ENCODE measurements at regions of chr1 and their contacts with region 1.

Region 1: GRCh38 chr1:156054500-156055280 is at the start of gene LAMTOR2:
- DNase-seq: peak; percentile 98
- H3K4me3 Mint-ChIP-seq: peak within 1 kb of the TSS; percentile 92
- H3K27ac Mint-ChIP-seq: peak within 1 kb of the TSS; percentile 93
- H3K4me1 Mint-ChIP-seq: peaks cover 24% of the 10 kb centered on the region
- H3K27me3 Mint-ChIP-seq: no peaks in the 10 kb centered on the region
- total RNA-seq, gene LAMTOR2: 54.9 to 55.9 TPM

Region 2: GRCh38 chr1:155308493-155309422 is 745.9 kb before region 1 on chr1 and contains the start of gene FDPS:
- CTCF ChIA-PET with region 1: no interaction called
- intact Hi-C with region 1: loop called (anchors 2 kb)
- DNase-seq: peak; percentile 99
- H3K4me3 Mint-ChIP-seq: peak within 1 kb of the TSS; percentile 96
- H3K27ac Mint-ChIP-seq: peak within 1 kb of the TSS; percentile 99
- H3K4me1 Mint-ChIP-seq: peaks cover 35% of the 10 kb centered on the region
- H3K27me3 Mint-ChIP-seq: no peaks in the 10 kb centered on the region
- total RNA-seq, gene FDPS: 332 to 333 TPM

Region 3: DNA sequence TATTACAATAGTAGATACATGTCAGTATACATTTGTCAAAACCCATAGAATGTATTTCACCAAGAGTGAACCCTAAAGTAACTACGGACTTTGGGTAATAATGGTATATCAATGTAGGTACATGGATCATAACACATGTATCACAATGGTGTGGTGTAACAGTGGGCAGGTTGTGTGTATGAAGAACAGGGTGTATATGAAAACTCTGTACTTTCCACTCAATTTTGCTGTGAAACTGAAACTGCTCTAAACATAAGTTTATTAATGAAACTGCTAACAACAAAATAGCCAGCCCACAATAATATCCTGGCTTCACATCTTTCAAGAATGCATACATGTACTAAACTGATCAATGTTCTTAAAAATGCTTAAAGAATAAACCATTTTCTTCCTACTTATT is 643.8 kb before region 1 on chr1:
- CTCF ChIA-PET with region 1: no interaction called
- intact Hi-C with region 1: no loop called
- DNase-seq: no peak
- H3K4me3 Mint-ChIP-seq: no peak overlapping the region
- H3K27ac Mint-ChIP-seq: no peak overlapping the region
- H3K4me1 Mint-ChIP-seq: peaks cover 1% of the 10 kb centered on the region
- H3K27me3 Mint-ChIP-seq: no peaks in the 10 kb centered on the region

Region 4: DNA sequence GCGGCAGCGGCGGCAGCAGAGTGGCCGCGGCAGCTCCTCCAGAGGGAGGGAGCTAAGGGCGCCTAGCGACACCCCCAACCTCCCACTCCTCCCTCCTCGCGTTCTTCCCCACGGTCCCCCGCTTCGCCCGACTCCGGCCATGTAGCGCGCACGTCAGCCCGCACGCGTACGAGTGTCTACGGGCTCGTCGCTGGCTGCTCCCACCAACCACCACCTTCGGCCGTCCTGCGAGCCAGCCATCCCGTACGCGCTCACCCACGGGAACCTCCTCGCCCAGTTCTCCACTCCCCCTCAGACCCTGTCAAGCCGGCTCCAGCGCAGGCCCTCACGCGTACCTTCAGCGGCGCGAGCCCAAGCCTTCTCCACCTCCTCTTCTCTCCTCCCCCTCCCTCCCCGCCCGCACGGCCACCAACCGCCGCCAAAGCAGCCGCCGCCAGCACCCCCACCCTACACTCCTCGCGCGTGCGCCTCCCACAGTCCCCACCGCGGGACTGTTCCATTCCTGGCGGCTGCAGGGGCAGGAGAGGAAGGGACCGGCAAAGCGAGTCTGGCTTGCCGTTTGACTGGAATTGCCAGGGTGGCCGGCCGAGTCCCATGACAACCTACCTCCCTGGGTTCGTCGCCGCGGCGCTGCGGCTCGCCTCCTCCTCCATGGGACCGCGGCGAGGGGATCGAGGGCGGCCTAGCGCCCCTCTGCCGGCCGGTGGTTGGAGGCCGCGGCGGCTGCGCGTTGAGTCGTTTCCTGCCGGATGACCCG is 366.2 kb before region 1 on chr1 and contains the start of gene YY1AP1:
- CTCF ChIA-PET with region 1: no interaction called
- intact Hi-C with region 1: loop called (anchors 1 kb)
- DNase-seq: peak; percentile 93
- H3K4me3 Mint-ChIP-seq: peak within 1 kb of the TSS; percentile 97
- H3K27ac Mint-ChIP-seq: peak within 1 kb of the TSS; percentile 95
- H3K4me1 Mint-ChIP-seq: peaks cover 70% of the 10 kb centered on the region
- H3K27me3 Mint-ChIP-seq: no peaks in the 10 kb centered on the region
- total RNA-seq, gene YY1AP1: 54.8 to 59.5 TPM

Region 5: DNA sequence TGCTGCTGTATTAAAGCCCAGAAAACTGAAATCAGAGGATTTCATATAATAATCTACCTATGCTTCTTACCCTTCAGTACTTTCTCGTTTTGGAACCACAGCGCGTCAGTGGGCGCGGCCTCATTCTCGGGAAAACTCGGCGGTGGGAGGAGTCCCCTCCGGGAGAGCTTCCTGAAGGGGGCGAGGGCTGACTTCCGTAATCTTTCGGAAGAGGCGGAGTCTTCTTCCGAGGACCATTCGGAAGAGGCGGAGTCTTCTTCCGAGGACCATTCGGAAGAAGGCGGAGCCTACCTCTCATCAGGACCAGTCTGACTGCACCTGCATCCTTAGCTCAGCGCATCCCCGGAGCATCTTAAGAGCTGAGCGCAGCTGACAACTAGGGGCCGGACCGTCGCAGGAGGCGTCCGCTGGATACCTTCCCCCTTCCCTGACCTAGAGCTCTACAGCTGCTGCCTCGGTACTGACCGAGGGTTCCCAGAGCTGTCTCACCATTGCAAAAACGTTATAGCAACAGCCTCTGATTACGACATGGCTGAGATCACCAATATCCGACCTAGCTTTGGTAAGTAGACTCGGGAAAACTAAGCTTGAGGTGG is 195.4 kb before region 1 on chr1 and contains the start of gene SYT11:
- CTCF ChIA-PET with region 1: interaction called, 5 read pairs
- intact Hi-C with region 1: loop called (anchors 1 kb)
- DNase-seq: peak; percentile 98
- H3K4me3 Mint-ChIP-seq: peak within 1 kb of the TSS; percentile 100
- H3K27ac Mint-ChIP-seq: peak within 1 kb of the TSS; percentile 83
- H3K4me1 Mint-ChIP-seq: peaks cover 53% of the 10 kb centered on the region
- H3K27me3 Mint-ChIP-seq: peaks cover 24% of the 10 kb centered on the region
- total RNA-seq, gene SYT11: 6.3 to 7.0 TPM

Region 6: GRCh38 chr1:155978325-155978972 is 76.2 kb before region 1 on chr1 and contains the start of gene ARHGEF2:
- CTCF ChIA-PET with region 1: no interaction called
- intact Hi-C with region 1: loop called (anchors 1 kb)
- DNase-seq: peak; percentile 87
- H3K4me3 Mint-ChIP-seq: peak within 1 kb of the TSS; percentile 98
- H3K27ac Mint-ChIP-seq: peak within 1 kb of the TSS; percentile 99
- H3K4me1 Mint-ChIP-seq: peaks cover 64% of the 10 kb centered on the region
- H3K27me3 Mint-ChIP-seq: no peaks in the 10 kb centered on the region
- total RNA-seq, gene ARHGEF2: 154 to 159 TPM

Region 7: DNA sequence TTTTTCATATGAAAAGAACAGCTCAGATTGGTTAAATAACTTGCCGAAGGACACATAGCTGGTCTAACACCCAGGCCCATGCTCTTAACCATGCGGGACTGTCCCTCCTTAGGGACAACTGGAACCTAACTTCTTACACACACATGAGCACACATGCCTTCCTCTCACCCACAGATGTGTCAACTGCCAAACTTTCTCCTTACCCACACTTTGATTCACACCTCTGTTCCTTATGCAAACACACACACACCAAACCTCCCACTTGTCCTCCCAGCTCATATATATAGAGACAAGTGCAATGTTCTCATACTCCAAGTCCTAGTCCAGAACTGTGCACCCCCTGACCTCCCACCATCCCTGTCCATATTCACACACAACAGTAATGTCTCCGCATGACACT is 10.5 kb after region 1 on chr1:
- CTCF ChIA-PET with region 1: interaction called, 5 read pairs
- intact Hi-C with region 1: loop called (anchors 1 kb)
- DNase-seq: no peak
- H3K4me3 Mint-ChIP-seq: no peak overlapping the region
- H3K27ac Mint-ChIP-seq: no peak overlapping the region
- H3K4me1 Mint-ChIP-seq: peaks cover 14% of the 10 kb centered on the region
- H3K27me3 Mint-ChIP-seq: no peaks in the 10 kb centered on the region

Region 8: DNA sequence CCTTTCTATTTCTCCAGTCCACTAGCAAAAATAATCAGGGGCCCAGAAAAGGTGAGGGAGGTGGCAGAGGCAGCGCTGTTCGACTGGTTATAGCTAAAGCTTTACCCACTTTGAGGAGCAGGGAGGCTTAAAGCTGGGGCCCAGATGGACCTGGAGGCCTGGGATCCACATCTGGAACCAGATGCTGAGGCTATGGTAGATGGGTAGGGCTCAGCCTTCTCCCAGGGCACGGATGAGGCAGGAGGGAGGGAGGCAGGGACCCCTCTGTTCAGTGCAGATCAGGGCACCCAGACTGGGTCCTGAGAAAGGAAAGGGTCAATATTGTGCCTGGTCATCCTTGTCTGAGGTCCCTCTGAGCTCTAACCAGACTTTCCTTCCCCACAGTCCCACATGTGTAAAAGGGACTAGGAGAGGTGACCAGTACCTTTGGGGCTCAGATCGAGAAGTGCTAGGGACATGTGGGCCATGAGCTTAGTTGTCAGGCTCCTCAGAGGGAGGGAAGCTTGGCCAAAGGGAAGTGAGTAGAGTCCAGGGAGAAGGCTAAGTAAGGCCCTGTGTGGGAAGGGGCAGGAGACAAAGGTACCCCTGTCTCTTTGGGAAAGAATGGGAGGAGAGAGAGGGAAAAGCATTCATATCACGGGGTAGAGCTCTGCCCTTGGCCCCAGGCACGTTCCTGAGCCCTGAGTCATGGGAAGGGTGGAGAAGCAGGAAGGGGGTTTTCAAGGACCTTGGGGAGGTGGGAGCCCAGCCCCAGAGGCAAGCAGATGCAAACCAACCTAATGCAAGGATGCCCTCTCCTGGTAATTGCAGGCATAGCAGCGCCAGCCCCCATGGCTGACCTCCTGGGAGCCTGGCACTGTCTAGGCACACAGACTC is 75.3 kb after region 1 on chr1:
- CTCF ChIA-PET with region 1: no interaction called
- intact Hi-C with region 1: loop called (anchors 2 kb)
- DNase-seq: peak; percentile 93
- H3K4me3 Mint-ChIP-seq: no peak overlapping the region
- H3K27ac Mint-ChIP-seq: no peak overlapping the region
- H3K4me1 Mint-ChIP-seq: peaks cover 50% of the 10 kb centered on the region
- H3K27me3 Mint-ChIP-seq: peaks cover 4% of the 10 kb centered on the region

Measured in activated naive CD4-positive, alpha-beta T cell treated with anti-CD3 and anti-CD28 coated beads for 36 hours (primary cell).